Activated CD4-positive, alpha-beta T cell treated with anti-CD3 and anti-CD28 coated beads for 36 hours (primary cell): ENCODE measurements at regions of chr6 and their contacts with region 1.

Region 1: DNA sequence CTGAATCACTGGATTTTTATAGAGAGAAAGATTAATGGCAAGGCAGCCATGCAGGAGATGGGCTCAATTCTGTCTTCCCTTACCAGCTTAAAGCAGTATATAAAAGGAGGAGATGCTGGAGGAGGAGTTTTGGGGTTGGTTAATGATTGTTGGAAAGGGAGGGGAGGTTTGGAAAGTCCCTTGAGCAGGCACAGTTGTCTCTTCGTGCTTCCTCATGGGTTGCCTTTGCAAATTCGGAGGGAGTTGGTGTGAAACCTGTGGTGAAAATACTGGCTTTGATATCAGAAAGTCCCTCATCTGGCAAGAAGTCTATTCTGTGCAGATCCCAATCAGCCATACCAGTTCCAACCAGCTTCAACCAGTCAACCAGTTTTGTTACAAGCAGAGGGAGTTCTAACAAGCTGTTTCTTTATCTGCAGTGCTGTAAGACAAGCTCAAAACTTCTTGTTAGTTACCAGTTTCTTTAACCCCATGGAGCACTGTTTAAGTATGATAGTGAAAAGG is 107.0 kb downstream of the HIVEP1 start:
- DNase-seq: peak; percentile 60
- ATAC-seq: peak; percentile 88
- H3K4me3 Mint-ChIP-seq: no peak overlapping the region
- H3K27ac Mint-ChIP-seq: peak overlapping the region; percentile 38
- H3K4me1 Mint-ChIP-seq: peaks cover 58% of the 10 kb centered on the region
- H3K27me3 Mint-ChIP-seq: no peaks in the 10 kb centered on the region

Region 2: DNA sequence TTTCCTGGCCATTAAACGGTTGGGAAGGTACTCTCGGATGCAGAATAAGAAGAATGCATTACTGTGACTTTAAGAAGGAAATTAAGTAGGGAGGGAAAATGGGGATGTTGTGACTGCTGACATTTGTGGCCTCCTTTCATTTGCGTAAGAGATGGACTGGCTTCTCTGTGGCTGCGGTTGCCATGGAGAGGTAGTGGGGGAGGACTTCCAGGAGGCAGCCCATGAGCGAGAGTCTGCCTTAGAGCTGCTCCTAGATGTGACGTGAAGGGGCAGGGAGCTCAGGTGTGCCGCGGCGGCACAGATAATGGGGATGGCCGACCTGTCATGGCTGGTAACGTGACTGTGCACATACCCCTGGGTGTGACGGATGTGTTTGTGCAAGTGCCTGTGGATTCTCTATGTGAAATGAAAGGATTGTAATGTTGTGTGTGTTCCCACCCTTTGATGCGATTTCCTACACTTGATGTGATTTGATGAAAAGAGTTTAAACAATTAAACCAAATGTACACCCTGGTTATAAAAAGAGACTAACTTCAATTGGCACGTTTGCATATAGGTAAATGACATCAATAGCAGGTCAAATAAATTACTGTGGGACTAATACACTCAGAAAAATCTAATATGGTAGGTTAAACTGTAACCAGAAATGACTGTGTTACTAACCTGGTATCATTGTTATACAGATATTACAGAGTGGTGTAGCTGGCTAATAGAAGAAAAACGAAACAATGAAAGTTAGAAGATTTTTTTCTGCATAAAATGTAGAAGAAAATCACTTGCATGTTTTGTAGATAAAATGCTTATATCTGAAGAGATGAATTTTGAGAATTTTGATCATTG is 58.1 kb before region 1 on chr6:
- CTCF ChIA-PET with region 1: no interaction called
- POLR2A ChIA-PET with region 1: no interaction called
- intact Hi-C with region 1: loop called in 1 of 2 experiments (anchors 5 kb)
- DNase-seq: peak; percentile 86
- ATAC-seq: peak; percentile 86
- H3K4me3 Mint-ChIP-seq: peak overlapping the region; percentile 72
- H3K27ac Mint-ChIP-seq: peak overlapping the region; percentile 83
- H3K4me1 Mint-ChIP-seq: peaks cover 77% of the 10 kb centered on the region
- H3K27me3 Mint-ChIP-seq: no peaks in the 10 kb centered on the region